Posterior cingulate gyrus (tissue), 11 donors: ENCODE measurements at regions of chr5 and their contacts with region 1.

Region 1: DNA sequence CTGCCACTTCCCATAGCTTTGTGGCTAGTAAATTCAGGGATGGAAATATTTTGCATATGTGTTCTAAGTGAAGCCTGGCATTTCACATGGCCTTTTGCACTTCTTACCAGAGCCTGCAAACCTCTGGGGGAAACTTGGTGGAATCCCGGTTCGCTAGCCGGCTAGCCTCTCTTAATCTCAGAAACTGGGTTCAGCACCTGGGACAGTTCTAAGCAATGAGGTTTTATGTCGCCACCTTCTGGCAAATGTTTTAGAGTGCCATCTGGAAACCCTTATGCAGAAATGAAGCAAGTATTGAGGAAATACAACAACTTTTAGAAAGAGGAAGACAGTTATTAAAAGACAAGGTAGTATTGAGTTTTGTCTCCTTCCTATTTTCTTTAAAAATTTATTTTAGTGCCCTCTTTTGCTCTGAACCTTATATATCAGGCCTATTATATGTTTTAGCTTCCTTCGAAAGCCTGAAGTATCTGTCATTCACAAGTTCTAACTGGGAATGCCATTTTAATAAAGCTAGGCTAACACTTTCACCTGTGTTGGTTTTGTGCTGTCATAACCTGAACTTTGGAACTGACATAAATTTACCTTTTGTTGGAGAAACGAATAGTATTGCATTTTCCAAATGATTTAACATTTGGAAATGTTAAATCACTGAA is 963 bp upstream of the HTR1A start:
- DNase-seq: peak in 5 of 10 donors; percentile 28 to 78 (median 46)

Region 2: GRCh38 chr5:62448528-62448927 is 1514.7 kb before region 1 on chr5:
- intact Hi-C with region 1: loop called (anchors 5 kb)
- DNase-seq: no peak

Region 3: DNA sequence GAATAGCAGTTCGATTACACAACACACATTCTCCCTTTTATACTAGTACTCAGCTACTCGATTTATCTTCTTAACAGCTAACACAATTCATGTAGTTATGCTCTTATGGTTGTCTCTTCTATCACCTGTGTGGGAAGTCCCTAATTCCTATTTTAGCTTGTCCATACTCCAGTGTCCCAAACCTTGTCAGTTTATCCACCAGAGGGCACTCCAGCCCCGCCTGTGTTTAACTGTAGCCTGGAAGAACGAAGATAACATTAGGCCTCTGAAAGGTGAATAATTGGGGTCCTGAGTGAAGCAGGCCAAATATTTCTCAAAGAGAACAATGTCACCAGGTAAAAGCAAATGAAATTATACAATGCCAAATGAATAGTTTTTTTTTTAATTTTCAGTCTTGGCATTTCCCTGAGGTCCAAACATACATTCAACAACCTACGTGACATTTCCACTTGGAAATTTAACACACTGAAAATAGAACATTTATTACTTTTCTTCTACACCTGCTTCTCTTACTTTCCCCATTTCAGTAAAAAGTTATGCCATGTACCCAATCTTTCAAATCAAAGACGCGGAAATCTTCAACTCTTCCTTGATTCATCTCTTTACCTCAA is 561.7 kb before region 1 on chr5:
- intact Hi-C with region 1: loop called (anchors 2 kb)
- DNase-seq: peak; percentile 39 to 95 (median 76)

Region 4: GRCh38 chr5:64722588-64722987 is 759.4 kb after region 1 on chr5:
- intact Hi-C with region 1: no loop called
- DNase-seq: no peak